Lower leg skin (tissue), 4 donors: ENCODE measurements at regions of chr1 and their contacts with region 1.

Region 1: GRCh38 chr1:42551180-42551579 is 88.1 kb downstream of the CCDC30 start:
- DNase-seq: no peak
- H3K4me3 ChIP-seq: no peak overlapping the region
- CTCF ChIP-seq: no peak
- POLR2A ChIP-seq: no peak

Region 2: DNA sequence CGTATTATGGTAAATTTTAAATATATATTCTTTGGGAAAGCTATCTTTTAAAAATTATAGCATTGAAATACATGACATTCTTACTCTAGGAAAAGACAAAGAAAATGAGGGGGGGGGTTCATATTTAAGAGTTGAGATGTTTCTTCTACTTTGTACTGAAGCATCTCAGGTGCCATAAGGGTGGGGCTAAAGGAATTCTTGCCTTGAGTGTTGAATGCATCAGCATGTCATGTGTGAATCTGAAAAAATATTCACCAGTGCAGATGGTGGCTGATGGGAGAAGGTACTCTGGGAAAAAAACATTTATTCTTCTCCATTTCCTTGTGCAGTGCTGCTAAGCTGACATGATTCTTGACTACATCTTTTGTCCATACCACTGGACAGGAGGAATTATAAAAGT is 17.1 kb before region 1 on chr1:
- intact Hi-C with region 1: loop called (anchors 1 kb)
- DNase-seq: no peak
- H3K4me3 ChIP-seq: no peak overlapping the region
- CTCF ChIP-seq: no peak
- POLR2A ChIP-seq: no peak

Region 3: DNA sequence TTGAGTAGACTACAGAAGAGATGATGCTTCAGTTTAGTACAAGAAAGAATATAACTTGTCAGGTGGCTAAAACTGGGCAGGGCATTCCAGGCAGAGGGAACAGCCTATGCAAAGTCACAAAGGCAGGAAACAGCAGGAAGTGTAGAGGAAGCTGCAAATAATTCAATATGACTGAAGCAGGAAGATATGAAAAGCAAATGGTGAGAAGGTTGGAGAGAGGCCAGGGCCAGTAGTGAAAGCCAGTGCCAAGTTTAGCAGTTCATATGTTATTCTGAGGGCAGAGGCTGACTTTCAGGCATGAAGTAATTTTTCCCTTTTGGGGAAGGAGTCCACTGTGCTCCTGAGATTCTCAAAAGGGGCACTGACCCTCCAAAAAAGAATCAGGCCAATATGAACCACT is 123.0 kb after region 1 on chr1:
- intact Hi-C with region 1: no loop called
- DNase-seq: no peak
- H3K4me3 ChIP-seq: no peak overlapping the region
- CTCF ChIP-seq: no peak
- POLR2A ChIP-seq: no peak

Region 4: DNA sequence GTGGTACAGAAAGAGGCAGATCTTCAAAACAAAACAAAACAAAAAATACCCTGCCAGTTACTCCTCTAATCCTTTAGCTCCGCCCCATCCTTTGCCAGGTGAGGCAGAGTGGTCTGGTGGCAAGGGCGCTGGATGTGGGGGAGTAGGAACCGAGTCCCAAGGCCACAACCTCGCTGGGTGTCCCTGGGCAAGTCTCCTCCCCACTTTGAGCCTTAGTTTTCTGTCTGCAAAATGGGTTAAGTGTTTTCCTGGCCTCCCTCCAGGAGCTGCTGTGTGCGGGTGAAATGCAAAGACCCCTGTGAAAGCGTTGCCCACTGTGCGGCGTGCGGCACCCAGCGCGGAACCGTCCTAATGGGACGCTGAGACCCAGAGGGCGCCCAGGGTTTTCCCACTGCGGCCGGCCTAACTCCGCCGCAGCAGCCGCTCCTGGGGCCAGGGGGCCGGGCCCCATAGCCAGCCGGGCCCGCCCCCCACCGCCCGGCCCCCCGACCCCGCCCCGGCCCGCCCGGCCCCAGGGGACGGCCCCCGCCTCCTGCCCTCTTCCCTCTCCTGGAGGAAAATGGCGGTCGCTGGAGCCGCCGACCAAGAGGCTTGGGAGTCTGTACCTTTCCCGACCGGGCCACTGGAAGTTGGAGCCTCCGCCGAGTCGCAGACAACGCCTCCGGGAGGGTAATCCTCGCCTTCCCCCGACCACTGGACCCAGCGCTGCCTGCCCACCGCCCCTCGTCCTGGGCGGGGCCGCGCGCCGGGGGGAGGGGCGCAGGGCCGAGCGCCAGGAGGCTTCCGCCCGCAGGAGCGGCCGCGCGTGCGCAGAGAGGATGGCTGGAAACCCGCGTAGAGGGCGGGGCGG is 265.6 kb after region 1 on chr1 and contains the starts of genes ERMAP and SVBP:
- intact Hi-C with region 1: no loop called
- DNase-seq: peak; percentile 88 to 98
- H3K4me3 ChIP-seq: peak within 1 kb of the TSS; percentile 53
- CTCF ChIP-seq: no peak
- POLR2A ChIP-seq: no peak
- total RNA-seq, gene ERMAP: 8.0 to 11.5 (median 9.3) TPM
- total RNA-seq, gene SVBP: 11.2 to 18.1 (median 14.1) TPM